Tibial artery (tissue), 4 donors: ENCODE measurements at regions of chr3 and their contacts with region 1.

Region 1: DNA sequence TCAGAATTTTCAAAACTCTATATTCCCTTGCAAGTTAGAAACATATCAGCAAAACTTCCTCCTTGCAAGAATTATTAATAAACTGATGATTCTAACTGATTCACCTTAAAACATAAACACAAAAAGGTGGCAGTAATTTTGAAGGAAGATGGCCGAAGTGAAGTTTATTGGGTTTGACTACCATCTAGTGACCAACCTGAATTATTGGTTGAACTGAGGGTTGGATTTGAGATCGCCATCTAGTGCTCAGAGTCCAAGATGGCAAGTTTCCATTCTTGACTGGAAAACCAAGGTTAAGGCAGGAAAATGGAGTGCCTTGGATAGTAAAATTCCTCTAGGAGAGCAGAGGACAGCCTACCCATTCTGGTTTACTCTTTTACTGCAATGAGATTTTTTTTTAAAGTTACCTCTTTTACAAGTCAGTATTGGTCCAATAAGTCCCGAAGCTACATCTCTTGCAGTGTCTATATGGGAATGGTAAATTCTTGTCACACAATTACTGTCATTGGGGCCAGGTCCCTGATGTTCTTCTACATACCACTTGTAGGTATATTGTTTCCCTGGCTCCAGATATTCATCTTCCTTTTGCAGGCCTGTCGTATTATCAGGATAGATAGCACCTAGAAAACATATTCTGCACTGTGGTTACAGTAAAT is 51.6 kb upstream of the CP start:
- DNase-seq: no peak
- H3K4me3 ChIP-seq: no peak overlapping the region
- H3K27ac ChIP-seq: peak overlapping the region; percentile 15 to 50
- H3K4me1 ChIP-seq: peaks cover 0 to 17% (median 3%) of the 10 kb centered on the region in 4 donors
- H3K27me3 ChIP-seq: no peaks in the 10 kb centered on the region
- CTCF ChIP-seq: peak; percentile 90 to 97

Region 2: DNA sequence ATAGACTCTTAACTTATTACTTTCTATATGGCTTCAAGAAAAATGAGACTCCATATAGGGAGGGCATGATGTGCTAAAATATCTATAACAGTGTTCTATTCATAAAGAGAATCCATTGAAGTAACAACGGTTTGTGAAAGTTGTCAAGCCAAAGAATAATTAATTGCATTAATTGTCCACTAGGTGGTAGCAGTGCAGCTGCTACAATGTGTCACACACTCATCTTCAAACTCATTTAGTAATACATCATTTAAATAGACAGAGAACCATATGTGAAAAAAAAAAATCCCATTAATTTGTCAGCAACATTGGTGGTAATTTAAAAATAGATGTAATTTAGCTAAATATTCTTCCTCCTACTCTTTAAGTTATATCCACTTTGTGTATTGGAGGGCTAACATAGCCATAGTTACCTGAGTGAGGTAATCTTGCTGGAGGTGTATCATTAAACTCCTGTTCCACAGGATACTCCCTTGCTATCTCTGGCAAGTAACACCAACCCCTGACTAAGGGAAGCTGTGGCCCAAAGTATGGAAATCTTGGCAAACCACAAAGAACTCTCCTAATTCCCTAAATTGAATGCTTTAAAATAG is 411.9 kb before region 1 on chr3:
- intact Hi-C with region 1: loop called (anchors 10 kb)
- DNase-seq: no peak
- H3K4me3 ChIP-seq: no peak overlapping the region
- H3K27ac ChIP-seq: no peak overlapping the region
- H3K4me1 ChIP-seq: no peaks in the 10 kb centered on the region
- H3K27me3 ChIP-seq: no peaks in the 10 kb centered on the region
- CTCF ChIP-seq: peak; percentile 72 to 81

Region 3: DNA sequence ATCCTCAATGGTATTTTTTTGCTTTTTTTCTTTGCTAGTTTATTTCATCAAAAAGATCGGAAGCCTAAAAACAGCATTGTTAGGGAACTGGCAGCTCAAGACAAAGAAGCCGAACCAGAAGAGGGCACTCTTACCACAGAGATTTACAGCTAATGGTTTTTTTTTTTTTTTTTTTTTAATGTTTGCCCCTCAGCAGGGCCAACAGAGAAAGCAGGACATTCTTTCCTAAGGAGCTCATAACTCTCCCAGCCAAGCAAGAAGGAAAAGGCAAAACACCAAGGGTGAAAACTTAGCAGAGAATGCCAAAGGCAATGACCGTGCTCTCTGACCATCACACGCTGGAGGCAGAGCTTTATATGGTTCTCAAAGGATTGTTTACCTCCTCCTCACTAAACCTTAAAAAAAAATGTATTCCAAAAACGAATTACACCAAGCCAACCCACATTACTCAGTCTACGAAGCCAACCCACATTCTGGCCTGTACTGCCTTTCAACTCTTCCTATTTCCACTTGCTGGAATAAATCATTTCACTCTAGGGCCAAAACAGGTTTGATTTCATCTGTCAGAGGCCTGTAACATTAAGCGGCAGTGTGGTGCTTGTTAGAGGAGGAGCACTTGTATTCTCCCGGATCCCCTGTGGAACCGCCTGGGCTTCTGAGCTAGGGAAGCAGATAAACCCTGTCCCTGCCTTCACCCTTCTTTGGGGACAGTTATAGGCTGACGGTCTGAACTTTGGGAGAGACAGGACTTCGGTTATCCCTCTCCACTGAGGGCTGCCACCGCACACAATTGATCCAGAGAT is 317.5 kb before region 1 on chr3:
- intact Hi-C with region 1: loop called (anchors 2 kb)
- DNase-seq: peak; percentile 69 to 88
- H3K4me3 ChIP-seq: peak overlapping the region in 1 of 2 donors; percentile 10
- H3K27ac ChIP-seq: peak overlapping the region; percentile 92 to 96
- H3K4me1 ChIP-seq: peaks cover 0 to 29% (median 18%) of the 10 kb centered on the region in 4 donors
- H3K27me3 ChIP-seq: no peaks in the 10 kb centered on the region
- CTCF ChIP-seq: peak; percentile 53 to 59

Region 4: GRCh38 chr3:149120051-149120972 is 152.9 kb before region 1 on chr3:
- intact Hi-C with region 1: loop called (anchors 2 kb)
- DNase-seq: no peak
- H3K4me3 ChIP-seq: no peak overlapping the region
- H3K27ac ChIP-seq: peak overlapping the region in 1 of 2 donors; percentile 9
- H3K4me1 ChIP-seq: peaks cover 0 to 9% (median 1%) of the 10 kb centered on the region in 4 donors
- H3K27me3 ChIP-seq: no peaks in the 10 kb centered on the region
- CTCF ChIP-seq: peak; percentile 60 to 74

Region 5: DNA sequence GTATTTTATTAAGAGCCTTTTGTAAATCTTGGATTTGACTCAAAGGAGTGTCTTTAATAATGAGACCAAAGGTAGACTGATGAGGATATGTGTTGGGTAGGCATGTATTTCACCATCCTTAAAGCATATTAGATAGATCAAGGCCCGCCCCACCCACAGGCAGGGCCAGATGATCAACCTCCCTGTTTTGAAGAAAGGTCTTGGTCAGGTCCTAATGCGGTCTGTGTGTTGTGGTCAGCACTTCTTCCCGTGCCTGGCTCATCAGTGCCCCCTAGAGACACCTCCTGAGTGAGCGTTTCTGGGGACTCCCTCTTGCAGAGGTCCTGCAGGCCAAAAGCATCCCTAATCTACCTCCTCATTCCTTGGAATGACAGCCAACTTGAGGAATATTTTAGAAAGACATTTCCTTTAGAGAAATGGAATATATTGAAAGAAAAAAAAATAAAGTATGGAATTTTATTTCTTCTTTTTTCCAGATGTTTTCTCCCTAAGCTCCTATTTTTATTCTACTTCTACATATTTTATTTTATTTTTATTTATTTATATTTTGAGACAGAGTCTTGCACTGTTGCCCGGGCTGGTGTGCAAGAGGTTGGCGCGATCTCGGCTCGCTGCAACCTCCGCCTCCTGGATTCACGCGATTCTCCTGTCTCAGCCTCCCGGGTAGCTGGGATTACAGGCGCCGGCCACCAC is 207.2 kb after region 1 on chr3:
- intact Hi-C with region 1: loop called (anchors 10 kb)
- DNase-seq: peak; percentile 82 to 91
- H3K4me3 ChIP-seq: no peak overlapping the region
- H3K27ac ChIP-seq: peak overlapping the region; percentile 73 to 76
- H3K4me1 ChIP-seq: peaks cover 0 to 31% (median 23%) of the 10 kb centered on the region in 4 donors
- H3K27me3 ChIP-seq: no peaks in the 10 kb centered on the region
- CTCF ChIP-seq: peak; percentile 83 to 86